HepG2 (cell line): ENCODE measurements at regions of chr2 and their contacts with region 1.

Region 1: DNA sequence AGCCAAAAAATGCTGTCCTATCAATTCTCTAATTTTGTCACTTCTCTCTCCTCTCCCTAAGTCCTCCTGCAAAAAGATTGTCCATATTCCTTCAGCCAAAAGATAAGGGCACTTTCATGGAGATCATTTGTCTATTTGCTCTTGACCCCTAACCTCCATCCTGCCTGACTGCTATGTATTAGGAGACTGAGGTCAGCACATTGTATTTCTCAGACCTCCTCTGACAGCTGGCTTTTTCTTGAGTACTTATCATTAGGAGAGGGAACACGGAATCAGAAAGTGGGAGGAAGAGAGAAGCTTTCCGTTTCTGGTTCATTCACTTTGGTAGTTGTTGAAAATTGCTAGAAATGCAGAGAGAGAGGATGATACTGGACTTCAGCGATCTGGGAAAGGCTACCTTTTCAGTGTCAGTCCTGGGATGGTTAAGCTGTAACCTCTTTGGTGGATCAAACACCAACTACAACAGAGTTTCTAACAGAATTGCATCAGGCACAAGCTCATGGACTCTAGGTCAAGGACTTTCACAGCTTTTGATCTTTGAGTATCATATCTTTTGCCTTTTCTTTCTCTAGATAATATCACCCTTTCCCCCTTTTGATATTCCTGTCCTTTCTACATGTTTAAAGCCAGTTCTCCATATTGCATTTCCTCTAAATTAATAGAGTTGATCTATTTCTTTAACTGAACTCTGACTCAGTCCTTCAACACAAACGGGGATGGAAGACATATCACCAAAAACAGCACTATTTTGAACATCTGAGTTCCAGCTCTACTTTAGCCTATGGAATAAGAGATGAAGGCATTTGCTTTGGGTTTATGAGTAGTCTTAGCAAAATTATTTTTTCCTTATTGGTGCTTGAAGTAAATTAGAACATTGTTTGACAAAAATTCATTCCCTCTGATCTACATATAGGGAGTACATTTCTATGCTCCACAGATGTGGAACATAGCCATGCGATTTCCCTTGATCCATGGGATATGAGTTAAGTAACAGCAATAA is 63.3 kb upstream of the KYNU start:
- DNase-seq: peak; percentile 78
- ATAC-seq: peak; percentile 99
- H3K4me3 ChIP-seq: peak overlapping the region; percentile 19 to 28 (median 24); a peak in 3 of 6 replicates
- H3K27ac ChIP-seq: peak overlapping the region; percentile 58
- H3K4me1 ChIP-seq: peaks cover 42% of the 10 kb centered on the region
- H3K27me3 ChIP-seq: no peaks in the 10 kb centered on the region
- CTCF ChIP-seq: no peak
- EP300 ChIP-seq: peak in 1 of 2 experiments; percentile 92; a peak in 2 of 4 replicates
- POLR2A ChIP-seq: no peak
- RAD21 ChIP-seq: no peak

Region 2: GRCh38 chr2:142675398-142675797 is 138.7 kb before region 1 on chr2:
- CTCF ChIA-PET with region 1: no interaction called
- POLR2A ChIA-PET with region 1: no interaction called
- in situ Hi-C with region 1: no loop called
- intact Hi-C with region 1: no loop called
- DNase-seq: no peak
- ATAC-seq: no peak
- H3K4me3 ChIP-seq: no peak overlapping the region
- H3K27ac ChIP-seq: no peak overlapping the region
- H3K4me1 ChIP-seq: no peaks in the 10 kb centered on the region
- H3K27me3 ChIP-seq: no peaks in the 10 kb centered on the region
- CTCF ChIP-seq: no peak
- EP300 ChIP-seq: no peak
- POLR2A ChIP-seq: no peak
- RAD21 ChIP-seq: no peak

Region 3: DNA sequence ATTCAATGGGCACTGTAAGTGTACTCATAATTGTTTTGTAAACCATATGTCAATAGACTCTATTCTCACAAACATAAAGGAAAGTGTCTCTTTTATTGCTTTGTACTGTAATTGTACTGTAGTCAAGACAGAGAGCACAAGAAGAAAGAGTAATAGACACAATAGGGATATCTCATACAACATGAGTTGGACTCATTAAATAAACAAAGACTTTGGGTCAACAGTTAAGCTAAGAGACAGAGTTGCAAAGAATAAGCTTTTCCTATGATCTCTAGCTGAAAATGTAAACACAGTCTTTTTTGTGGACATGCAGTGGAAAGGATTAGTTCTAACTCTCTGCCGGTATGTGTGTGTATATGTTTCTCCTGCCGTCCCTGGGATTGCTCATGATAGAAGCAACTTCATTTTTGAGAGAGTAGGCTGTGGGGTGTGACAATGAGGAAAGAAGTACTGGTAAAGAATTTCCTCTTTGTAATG is 49.4 kb after region 1 on chr2:
- CTCF ChIA-PET with region 1: no interaction called
- POLR2A ChIA-PET with region 1: interaction called, 15 read pairs
- in situ Hi-C with region 1: no loop called
- intact Hi-C with region 1: loop called (anchors 1 kb)
- DNase-seq: peak; percentile 98
- ATAC-seq: peak; percentile 99
- H3K4me3 ChIP-seq: peak overlapping the region in 1 of 3 experiments; percentile 17; a peak in 1 of 6 replicates
- H3K27ac ChIP-seq: peak overlapping the region; percentile 58
- H3K4me1 ChIP-seq: peaks cover 52% of the 10 kb centered on the region
- H3K27me3 ChIP-seq: no peaks in the 10 kb centered on the region
- CTCF ChIP-seq: no peak
- EP300 ChIP-seq: peak; percentile 39 to 96; a peak in 3 of 4 replicates
- POLR2A ChIP-seq: no peak
- RAD21 ChIP-seq: no peak